CD8-positive, alpha-beta T cell (primary cell): ENCODE measurements at regions of chr14 and their contacts with region 1.

Region 1: DNA sequence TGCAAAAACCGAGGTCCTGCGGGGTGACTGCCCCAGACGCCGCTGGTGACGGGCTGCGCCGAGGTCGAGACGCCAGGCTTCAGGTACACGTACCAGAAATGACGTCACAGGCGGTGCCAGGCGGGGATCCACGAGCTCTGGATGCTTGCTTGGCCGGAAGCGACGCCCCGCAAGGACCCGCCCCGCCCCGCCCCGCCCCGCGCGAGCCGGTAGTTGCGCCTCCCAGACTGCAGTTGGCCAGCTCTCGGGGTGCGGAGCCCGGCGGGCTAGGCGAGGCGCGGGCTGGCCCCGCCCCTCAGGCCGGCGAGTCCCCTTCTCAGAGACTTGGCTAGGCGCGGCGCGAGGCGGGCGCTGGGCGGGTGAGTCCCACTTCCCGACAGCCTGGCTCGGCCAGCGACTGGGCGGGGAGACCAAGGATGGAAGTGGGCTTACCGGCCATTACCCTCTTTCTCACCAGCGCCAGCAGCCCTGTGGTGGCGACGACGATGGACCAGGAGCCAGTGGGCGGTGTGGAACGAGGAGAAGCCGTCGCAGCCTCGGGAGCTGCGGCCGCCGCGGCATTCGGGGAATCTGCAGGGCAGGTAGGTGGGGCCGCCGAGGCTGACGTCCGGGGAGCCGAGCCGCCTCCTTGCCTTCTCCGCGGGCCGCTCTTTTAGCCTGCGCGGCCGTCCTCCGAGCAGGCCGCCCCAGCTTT is at the start of gene FAM177A1:
- DNase-seq: peak; percentile 97 to 100 (median 99)
- ATAC-seq: peak; percentile 83
- H3K4me3 ChIP-seq: peak within 1 kb of the TSS; percentile 81 to 96
- H3K4me3 Mint-ChIP-seq: peak within 1 kb of the TSS; percentile 82
- H3K27ac ChIP-seq: peak within 1 kb of the TSS; percentile 96 to 100
- H3K27ac Mint-ChIP-seq: peak within 1 kb of the TSS; percentile 98
- H3K4me1 ChIP-seq: peaks cover 20% of the 10 kb centered on the region
- H3K4me1 Mint-ChIP-seq: peaks cover 28% of the 10 kb centered on the region
- H3K27me3 ChIP-seq: no peaks in the 10 kb centered on the region
- H3K27me3 Mint-ChIP-seq: no peaks in the 10 kb centered on the region
- CTCF ChIP-seq: no peak
- total RNA-seq, gene FAM177A1: 227 to 230 TPM

Region 2: DNA sequence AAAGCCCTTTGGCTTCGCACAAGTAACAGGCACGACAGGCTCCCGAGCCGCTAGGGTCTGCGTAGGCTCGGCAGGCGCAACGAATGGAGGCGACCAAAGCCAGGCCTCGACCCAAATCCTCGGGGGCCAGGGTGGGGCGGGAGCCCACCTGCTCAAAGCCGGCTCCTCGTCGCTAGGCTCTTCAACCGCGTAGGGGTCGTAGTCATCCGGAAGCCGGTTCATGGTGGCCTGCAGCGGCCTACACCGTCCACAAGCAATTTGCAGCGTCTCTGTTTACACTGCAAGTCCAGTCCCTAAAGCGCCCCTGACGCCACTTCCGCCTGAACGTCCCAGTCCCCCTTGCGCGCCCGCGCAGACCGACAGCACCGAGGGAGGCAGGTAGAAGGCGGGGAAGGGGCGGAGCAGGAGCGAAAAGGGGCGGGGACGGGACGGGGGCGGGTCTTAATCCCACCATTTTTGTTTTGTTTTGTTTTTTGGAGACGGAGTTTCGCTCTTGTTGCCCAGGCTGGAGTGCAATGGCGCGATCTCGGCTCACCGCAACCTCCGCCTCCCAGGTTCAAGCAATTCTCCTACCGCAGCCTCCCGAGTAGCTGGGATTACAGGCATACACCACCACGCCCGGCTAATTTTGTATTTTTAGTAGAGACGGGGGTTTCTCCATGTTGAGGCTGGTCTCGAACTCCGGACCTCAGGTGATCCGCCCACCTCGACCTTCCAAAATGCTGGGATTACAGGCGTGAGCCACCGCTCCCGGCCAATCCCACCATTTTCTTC is 506.6 kb before region 1 on chr14 and contains the start of gene EAPP:
- CTCF ChIA-PET with region 1: no interaction called
- POLR2A ChIA-PET with region 1: no interaction called
- intact Hi-C with region 1: loop called in 1 of 2 experiments (anchors 5 kb)
- DNase-seq: peak; percentile 88 to 97 (median 95)
- ATAC-seq: peak; percentile 98
- H3K4me3 ChIP-seq: peak within 1 kb of the TSS; percentile 94 to 95
- H3K4me3 Mint-ChIP-seq: peak within 1 kb of the TSS; percentile 97
- H3K27ac ChIP-seq: peak within 1 kb of the TSS; percentile 96 to 97
- H3K27ac Mint-ChIP-seq: peak within 1 kb of the TSS; percentile 98
- H3K4me1 ChIP-seq: peaks cover 16% of the 10 kb centered on the region
- H3K4me1 Mint-ChIP-seq: peaks cover 34% of the 10 kb centered on the region
- H3K27me3 ChIP-seq: no peaks in the 10 kb centered on the region
- H3K27me3 Mint-ChIP-seq: no peaks in the 10 kb centered on the region
- CTCF ChIP-seq: no peak
- total RNA-seq, gene EAPP: 91.0 to 91.4 TPM

Region 3: DNA sequence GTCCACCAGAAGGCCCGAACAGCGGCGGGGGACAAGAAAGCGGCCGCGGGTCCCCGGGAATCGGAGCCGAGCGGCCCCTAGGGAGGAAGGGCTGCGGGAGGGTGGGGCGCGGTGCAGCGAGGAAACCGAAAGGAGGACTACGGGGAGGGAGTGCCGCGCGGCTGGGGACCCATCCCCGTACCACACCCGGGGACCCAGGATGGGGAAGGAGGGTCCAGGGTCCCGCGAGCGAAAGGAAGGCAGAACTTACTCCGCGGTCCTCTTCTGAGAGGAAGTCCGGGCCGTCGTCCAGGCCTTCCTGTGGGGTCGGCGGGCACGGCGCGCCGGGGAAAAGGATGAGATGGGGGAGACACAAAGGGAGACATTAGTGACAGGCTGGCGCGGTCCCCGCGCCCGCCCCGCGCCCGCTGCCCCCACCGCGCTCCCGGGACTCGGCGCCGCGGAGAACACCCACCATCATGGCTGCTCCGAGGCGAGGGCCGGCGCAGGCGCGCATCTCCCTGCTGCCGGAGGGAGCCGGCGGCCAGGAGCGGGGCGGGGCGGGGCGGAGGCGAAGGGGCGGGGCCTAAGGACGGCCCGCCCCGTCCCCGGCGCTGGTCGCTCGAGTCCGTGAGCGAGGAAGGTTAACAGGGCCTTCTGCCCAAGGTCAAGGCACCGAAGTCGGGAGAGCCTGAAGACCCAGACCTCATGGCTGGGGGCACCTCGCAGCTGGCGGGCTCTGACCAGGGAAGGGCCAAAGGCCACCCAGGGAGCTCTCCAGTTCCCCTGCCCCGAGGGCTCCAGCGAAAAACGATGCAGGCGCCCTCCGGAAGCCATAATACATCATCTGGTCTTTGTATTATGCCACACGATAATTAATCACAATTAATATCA is 416.3 kb before region 1 on chr14 and contains the start of gene SNX6:
- CTCF ChIA-PET with region 1: no interaction called
- POLR2A ChIA-PET with region 1: no interaction called
- intact Hi-C with region 1: loop called (anchors 1 to 5 kb)
- DNase-seq: peak; percentile 70 to 92 (median 83)
- ATAC-seq: peak; percentile 96
- H3K4me3 ChIP-seq: peak within 1 kb of the TSS; percentile 95 to 100
- H3K4me3 Mint-ChIP-seq: peak within 1 kb of the TSS; percentile 94
- H3K27ac ChIP-seq: peak within 1 kb of the TSS; percentile 91 to 96
- H3K27ac Mint-ChIP-seq: peak within 1 kb of the TSS; percentile 93
- H3K4me1 ChIP-seq: peaks cover 20% of the 10 kb centered on the region
- H3K4me1 Mint-ChIP-seq: peaks cover 37% of the 10 kb centered on the region
- H3K27me3 ChIP-seq: no peaks in the 10 kb centered on the region
- H3K27me3 Mint-ChIP-seq: peaks cover 4% of the 10 kb centered on the region
- CTCF ChIP-seq: no peak
- total RNA-seq, gene SNX6: 51.2 to 53.5 TPM

Region 4: GRCh38 chr14:34931206-34931605 is 115.0 kb before region 1 on chr14:
- CTCF ChIA-PET with region 1: no interaction called
- POLR2A ChIA-PET with region 1: interaction called, 6 read pairs
- intact Hi-C with region 1: loop called (anchors 2 to 5 kb)
- DNase-seq: peak in 7 of 9 experiments; percentile 9 to 87 (median 59)
- ATAC-seq: peak; percentile 90
- H3K4me3 ChIP-seq: peak overlapping the region in 1 of 2 experiments; percentile 4
- H3K4me3 Mint-ChIP-seq: peak overlapping the region; percentile 49
- H3K27ac ChIP-seq: peak overlapping the region; percentile 87 to 93
- H3K27ac Mint-ChIP-seq: peak overlapping the region; percentile 97
- H3K4me1 ChIP-seq: peaks cover 28% of the 10 kb centered on the region
- H3K4me1 Mint-ChIP-seq: peaks cover 30% of the 10 kb centered on the region
- H3K27me3 ChIP-seq: no peaks in the 10 kb centered on the region
- H3K27me3 Mint-ChIP-seq: no peaks in the 10 kb centered on the region
- CTCF ChIP-seq: no peak

Region 5: GRCh38 chr14:35088514-35088913 is 42.3 kb after region 1 on chr14:
- CTCF ChIA-PET with region 1: no interaction called
- POLR2A ChIA-PET with region 1: no interaction called
- intact Hi-C with region 1: loop called in 1 of 2 experiments (anchors 5 kb)
- DNase-seq: no peak
- ATAC-seq: no peak
- H3K4me3 ChIP-seq: no peak overlapping the region
- H3K4me3 Mint-ChIP-seq: no peak overlapping the region
- H3K27ac ChIP-seq: no peak overlapping the region
- H3K27ac Mint-ChIP-seq: no peak overlapping the region
- H3K4me1 ChIP-seq: no peaks in the 10 kb centered on the region
- H3K4me1 Mint-ChIP-seq: no peaks in the 10 kb centered on the region
- H3K27me3 ChIP-seq: no peaks in the 10 kb centered on the region
- H3K27me3 Mint-ChIP-seq: no peaks in the 10 kb centered on the region
- CTCF ChIP-seq: no peak

Region 6: GRCh38 chr14:35808076-35808652 is 762.0 kb after region 1 on chr14:
- CTCF ChIA-PET with region 1: no interaction called
- POLR2A ChIA-PET with region 1: no interaction called
- intact Hi-C with region 1: loop called (anchors 1 to 5 kb)
- DNase-seq: peak in 3 of 9 experiments; percentile 16 to 63 (median 41)
- ATAC-seq: no peak
- H3K4me3 ChIP-seq: peak overlapping the region; percentile 68 to 80
- H3K4me3 Mint-ChIP-seq: peak overlapping the region; percentile 98
- H3K27ac ChIP-seq: peak overlapping the region; percentile 49 to 86
- H3K27ac Mint-ChIP-seq: peak overlapping the region; percentile 92
- H3K4me1 ChIP-seq: peaks cover 15% of the 10 kb centered on the region
- H3K4me1 Mint-ChIP-seq: peaks cover 38% of the 10 kb centered on the region
- H3K27me3 ChIP-seq: no peaks in the 10 kb centered on the region
- H3K27me3 Mint-ChIP-seq: no peaks in the 10 kb centered on the region
- CTCF ChIP-seq: no peak